Ascending aorta (tissue), 2 donors: ENCODE measurements at regions of chr17 and their contacts with region 1.

Region 1: GRCh38 chr17:75109407-75110233 is at the start of gene ARMC7:
- DNase-seq: peak; percentile 48 to 93
- H3K4me3 ChIP-seq: peak within 1 kb of the TSS; percentile 93 to 94
- H3K27ac ChIP-seq: peak within 1 kb of the TSS; percentile 41 to 44
- H3K4me1 ChIP-seq: peaks cover 3 to 24% of the 10 kb centered on the region in 2 donors
- H3K27me3 ChIP-seq: no peaks in the 10 kb centered on the region
- CTCF ChIP-seq: no peak
- total RNA-seq, gene ARMC7: 1.4 TPM

Region 2: DNA sequence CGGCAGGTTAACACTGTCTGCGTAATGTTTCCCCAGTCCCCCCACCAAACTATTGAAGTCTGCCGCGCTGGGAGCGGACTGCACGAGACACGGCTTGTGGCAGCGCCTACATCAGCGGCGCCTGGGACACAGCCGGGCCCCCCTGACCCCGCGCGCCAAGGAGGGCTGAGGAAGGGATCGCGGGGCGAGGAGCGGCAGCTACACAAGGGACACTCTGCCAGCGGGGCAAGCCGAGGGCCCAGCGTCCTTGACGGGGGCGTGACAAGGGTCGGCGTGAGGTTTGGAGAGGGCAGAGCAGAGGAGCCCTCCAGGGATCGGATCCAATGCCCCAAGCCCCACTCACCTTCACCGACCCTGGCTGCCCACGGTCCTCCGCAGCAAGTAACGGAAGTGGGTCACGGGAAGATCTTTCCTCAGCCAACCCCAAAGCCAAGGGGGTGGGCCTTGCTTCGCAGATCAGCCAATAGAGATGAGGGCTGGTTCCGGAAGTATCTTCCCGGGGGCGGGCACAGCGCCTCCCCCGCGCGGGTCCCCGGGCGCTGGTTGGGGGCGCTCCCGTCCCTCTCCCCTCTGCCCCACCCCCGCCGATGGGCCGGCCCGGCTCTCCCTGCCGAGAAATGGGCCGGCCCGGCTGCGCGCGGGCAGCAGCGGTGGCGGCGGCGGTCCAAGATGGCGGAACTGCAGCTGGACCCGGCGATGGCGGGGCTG is 62.9 kb before region 1 on chr17 and contains the starts of genes ATP5PD and KCTD2:
- intact Hi-C with region 1: loop called (anchors 2 kb)
- DNase-seq: peak; percentile 88 to 98
- H3K4me3 ChIP-seq: peak within 1 kb of the TSS; percentile 64 to 74
- H3K27ac ChIP-seq: peak within 1 kb of the TSS; percentile 90
- H3K4me1 ChIP-seq: peaks cover 9 to 13% of the 10 kb centered on the region in 2 donors
- H3K27me3 ChIP-seq: no peaks in the 10 kb centered on the region
- CTCF ChIP-seq: no peak
- total RNA-seq, gene ATP5PD: 133 TPM
- total RNA-seq, gene KCTD2: 31.4 TPM

Region 3: GRCh38 chr17:75131280-75132017 is 21.8 kb after region 1 on chr17 and contains the start of gene NT5C:
- intact Hi-C with region 1: loop called (anchors 1 kb)
- DNase-seq: peak in 1 of 2 donors; percentile 85
- H3K4me3 ChIP-seq: peak within 1 kb of the TSS; percentile 46 to 85
- H3K27ac ChIP-seq: peak within 1 kb of the TSS; percentile 90
- H3K4me1 ChIP-seq: peaks cover 0 to 6% of the 10 kb centered on the region in 2 donors
- H3K27me3 ChIP-seq: no peaks in the 10 kb centered on the region
- CTCF ChIP-seq: peak; percentile 58 to 76 (median 76)
- total RNA-seq, gene NT5C: 18.3 TPM

Region 4: GRCh38 chr17:75154195-75155106 is 44.8 kb after region 1 on chr17 and contains the start of gene JPT1:
- intact Hi-C with region 1: no loop called
- DNase-seq: peak; percentile 95 to 99
- H3K4me3 ChIP-seq: peak within 1 kb of the TSS; percentile 94 to 98
- H3K27ac ChIP-seq: peak within 1 kb of the TSS; percentile 51 to 69
- H3K4me1 ChIP-seq: peaks cover 6% of the 10 kb centered on the region in 2 donors
- H3K27me3 ChIP-seq: no peaks in the 10 kb centered on the region
- CTCF ChIP-seq: peak in 1 of 3 experiments; percentile 14
- total RNA-seq, gene JPT1: 23.0 TPM

Region 5: DNA sequence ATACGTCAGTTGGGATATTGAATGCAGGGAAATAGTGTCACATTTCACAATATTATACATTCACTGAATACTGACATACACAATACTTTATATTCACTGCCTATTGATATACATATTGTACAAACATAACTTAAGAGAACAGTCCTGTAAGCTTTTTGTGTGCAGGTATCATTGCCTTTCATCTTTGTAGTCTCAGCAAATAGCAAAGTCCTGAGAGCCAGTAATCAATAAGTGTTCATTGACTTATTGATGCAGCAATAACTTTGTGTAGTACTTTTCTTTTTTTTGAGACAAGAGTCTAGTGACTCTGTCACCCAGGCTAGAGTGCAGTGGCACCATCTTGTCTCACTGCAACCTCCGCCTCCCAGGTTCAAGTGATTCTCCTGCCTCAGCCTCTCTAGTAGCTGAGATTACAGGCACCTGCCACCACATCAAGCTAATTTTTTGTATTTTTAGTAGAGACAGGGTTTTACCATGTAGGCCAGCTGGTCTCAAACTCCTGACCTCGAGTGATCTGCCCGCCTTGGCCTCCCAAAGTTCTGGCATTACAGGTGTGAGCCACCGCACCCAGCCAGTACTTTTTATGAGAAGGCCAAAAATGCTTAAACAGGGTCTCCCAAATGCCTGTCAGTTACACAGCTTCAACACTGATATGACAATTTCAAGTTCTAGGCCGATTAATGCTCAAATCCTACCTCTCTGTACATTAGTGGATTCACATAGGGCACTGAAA is 90.4 kb after region 1 on chr17:
- intact Hi-C with region 1: loop called (anchors 2 kb)
- DNase-seq: no peak
- H3K4me3 ChIP-seq: no peak overlapping the region
- H3K27ac ChIP-seq: no peak overlapping the region
- H3K4me1 ChIP-seq: no peaks in the 10 kb centered on the region
- H3K27me3 ChIP-seq: no peaks in the 10 kb centered on the region
- CTCF ChIP-seq: no peak

Region 6: GRCh38 chr17:75271233-75271954 is 161.8 kb after region 1 on chr17:
- intact Hi-C with region 1: loop called (anchors 5 kb)
- DNase-seq: peak in 1 of 2 donors; percentile 88
- H3K4me3 ChIP-seq: peak overlapping the region; percentile 75 to 95
- H3K27ac ChIP-seq: peak overlapping the region; percentile 89 to 99
- H3K4me1 ChIP-seq: peaks cover 15 to 22% of the 10 kb centered on the region in 2 donors
- H3K27me3 ChIP-seq: no peaks in the 10 kb centered on the region
- CTCF ChIP-seq: peak; percentile 14 to 98 (median 52)